Common myeloid progenitor, CD34-positive (primary cell): ENCODE measurements at regions of chr5 and their contacts with region 1.

Region 1: DNA sequence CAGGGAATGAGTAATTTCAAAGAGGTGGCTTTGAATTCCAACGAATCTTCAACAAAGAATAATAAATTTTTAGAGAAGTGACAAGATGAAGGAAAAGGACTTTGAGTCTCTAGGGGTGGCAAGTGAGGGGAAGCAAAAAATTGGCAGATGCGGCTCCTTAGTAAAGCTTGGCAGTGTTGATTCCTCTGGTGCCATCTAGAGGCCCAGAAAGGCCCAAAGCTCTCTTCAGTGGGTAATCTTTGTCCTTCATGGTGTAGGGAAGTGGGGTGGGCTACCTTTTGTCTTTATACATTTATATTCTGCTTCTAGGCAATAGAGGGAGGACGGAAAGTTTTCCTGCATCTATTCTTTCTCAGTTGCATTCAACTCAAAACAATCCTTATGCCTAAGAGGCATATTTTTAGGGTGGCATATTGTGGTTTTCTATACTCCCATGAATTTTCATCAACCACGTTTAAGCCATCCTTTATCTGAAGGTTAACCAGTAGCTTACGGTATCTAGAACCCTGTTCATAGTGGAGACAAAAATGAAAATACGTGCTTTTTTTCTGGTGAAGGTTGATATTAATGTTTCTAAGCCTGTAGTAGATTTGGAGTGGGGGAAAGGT is 17.5 kb upstream of the ROPN1L start:
- DNase-seq: peak; percentile 81 to 92 (median 91)
- H3K4me3 ChIP-seq: no peak overlapping the region
- H3K27ac ChIP-seq: no peak overlapping the region
- H3K4me1 ChIP-seq: peaks cover 29 to 44% (median 39%) of the 10 kb centered on the region in 4 experiments
- H3K27me3 ChIP-seq: no peaks in the 10 kb centered on the region

Region 2: DNA sequence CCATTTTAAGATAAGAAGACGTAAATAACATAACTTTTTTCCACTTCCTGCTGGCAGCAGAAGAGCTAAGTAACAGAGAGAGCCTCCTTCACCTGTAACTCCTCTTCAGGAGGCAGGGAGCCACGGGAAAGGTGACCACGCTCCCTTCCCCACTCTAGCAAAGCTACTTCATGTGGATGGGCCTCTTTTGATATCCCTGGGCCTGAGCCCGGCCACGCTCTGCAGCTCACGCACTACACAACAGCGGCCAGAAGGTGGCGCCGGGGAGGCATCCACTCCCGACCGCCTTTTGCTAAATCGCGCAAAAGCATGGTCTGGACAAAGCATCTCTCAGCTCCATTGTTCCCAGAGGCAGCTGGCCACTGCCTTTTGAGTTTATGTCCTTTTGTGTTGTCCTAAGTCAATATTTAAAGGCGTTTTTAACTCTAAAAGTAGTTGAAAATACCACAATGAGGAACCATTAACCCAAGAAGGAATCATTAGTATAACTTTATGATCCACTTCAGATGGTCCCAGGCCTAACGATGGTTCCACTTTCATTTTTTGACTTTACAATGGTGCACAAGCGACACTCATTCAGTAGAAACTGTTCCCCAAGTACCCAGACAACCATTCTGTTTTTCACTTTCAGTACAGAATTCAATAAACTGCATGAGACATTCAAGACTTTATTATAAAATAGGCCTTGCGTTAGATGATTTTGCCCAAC is 140.1 kb before region 1 on chr5:
- CTCF ChIA-PET with region 1: interaction called, 67 read pairs
- POLR2A ChIA-PET with region 1: no interaction called
- DNase-seq: peak; percentile 66 to 80 (median 73)
- H3K4me3 ChIP-seq: no peak overlapping the region
- H3K27ac ChIP-seq: no peak overlapping the region
- H3K4me1 ChIP-seq: peaks cover 0 to 7% (median 2%) of the 10 kb centered on the region in 4 experiments
- H3K27me3 ChIP-seq: no peaks in the 10 kb centered on the region

Region 3: GRCh38 chr5:10353241-10354047 is 70.8 kb before region 1 on chr5 and contains the start of gene MARCHF6:
- CTCF ChIA-PET with region 1: interaction called, 10 read pairs
- POLR2A ChIA-PET with region 1: no interaction called
- DNase-seq: peak; percentile 93 to 96 (median 95)
- H3K4me3 ChIP-seq: peak within 1 kb of the TSS; percentile 84 to 100 (median 96)
- H3K27ac ChIP-seq: peak within 1 kb of the TSS; percentile 91 to 96
- H3K4me1 ChIP-seq: peaks cover 11 to 51% (median 36%) of the 10 kb centered on the region in 4 experiments
- H3K27me3 ChIP-seq: no peaks in the 10 kb centered on the region

Region 4: DNA sequence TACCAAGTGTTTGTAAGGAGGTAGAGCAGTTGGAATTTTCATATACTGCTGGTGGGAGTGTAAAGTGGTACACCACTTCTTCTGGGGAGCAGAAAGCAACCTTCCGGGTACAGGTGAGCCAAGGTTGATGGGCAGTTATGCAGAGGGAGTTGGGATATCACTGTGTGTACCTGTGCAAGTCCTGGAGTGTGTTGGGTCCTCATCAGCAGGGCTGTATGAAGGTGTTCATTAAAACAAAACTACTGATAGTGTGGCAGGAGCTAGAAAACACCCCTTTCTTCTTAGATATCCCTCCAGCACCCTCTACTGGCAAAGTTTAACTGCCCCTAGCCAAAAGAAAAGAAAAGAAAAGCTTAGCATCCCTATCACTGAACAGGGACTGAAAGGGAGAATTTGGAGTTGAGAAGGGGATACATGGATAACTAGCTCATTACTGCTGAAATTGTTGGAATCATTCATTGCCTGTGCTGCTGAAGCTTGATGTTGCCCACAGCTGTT is 60.0 kb before region 1 on chr5:
- CTCF ChIA-PET with region 1: interaction called, 13 read pairs
- POLR2A ChIA-PET with region 1: interaction called, 4 read pairs
- DNase-seq: peak; percentile 60 to 76 (median 68)
- H3K4me3 ChIP-seq: no peak overlapping the region
- H3K27ac ChIP-seq: no peak overlapping the region
- H3K4me1 ChIP-seq: peaks cover 3 to 25% (median 12%) of the 10 kb centered on the region in 4 experiments
- H3K27me3 ChIP-seq: no peaks in the 10 kb centered on the region

Region 5: DNA sequence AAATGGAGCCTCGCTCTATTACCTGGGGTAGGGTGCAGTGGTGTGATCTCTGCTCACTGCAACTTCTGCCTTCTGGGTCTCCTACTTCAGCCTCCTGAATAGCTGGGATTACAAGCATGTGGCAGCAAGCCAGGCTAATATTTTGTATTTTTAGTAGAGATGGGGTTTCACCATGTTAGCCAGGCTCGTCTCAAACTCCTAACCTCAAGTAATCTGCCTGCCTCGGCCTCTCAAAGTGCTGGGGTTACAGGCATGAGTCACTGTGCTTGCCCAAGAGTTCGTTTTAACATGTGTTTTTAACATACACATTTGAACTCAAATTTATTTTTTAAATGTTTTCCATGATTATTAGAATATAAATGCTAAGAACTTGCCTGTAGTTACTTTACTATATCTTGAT is 36.5 kb before region 1 on chr5:
- CTCF ChIA-PET with region 1: interaction called, 11 read pairs
- POLR2A ChIA-PET with region 1: no interaction called
- DNase-seq: no peak
- H3K4me3 ChIP-seq: no peak overlapping the region
- H3K27ac ChIP-seq: no peak overlapping the region
- H3K4me1 ChIP-seq: no peaks in the 10 kb centered on the region
- H3K27me3 ChIP-seq: no peaks in the 10 kb centered on the region

Region 6: DNA sequence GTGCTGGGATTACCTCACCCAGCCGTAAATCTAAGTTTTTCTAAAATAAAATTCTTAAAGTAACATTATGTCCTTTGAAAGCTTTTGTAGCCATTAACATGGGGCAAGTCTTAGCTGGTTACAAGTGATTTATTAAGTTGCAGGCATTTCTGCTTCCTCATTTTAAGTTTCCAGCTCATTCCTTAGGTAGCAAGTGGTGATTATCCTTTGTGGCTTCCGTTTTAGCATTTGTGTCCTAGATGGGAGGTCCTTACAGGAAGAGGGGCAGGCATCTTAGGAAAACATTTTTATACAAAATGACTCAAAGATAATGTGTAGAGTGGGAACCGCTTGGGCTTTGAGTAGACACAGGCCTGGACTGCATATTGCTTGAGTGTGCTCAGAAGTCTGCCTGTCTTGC is 17.6 kb before region 1 on chr5:
- CTCF ChIA-PET with region 1: interaction called, 23 read pairs
- POLR2A ChIA-PET with region 1: interaction called, 6 read pairs
- DNase-seq: peak; percentile 24 to 69 (median 51)
- H3K4me3 ChIP-seq: peak overlapping the region in 1 of 7 experiments; percentile 44
- H3K27ac ChIP-seq: no peak overlapping the region
- H3K4me1 ChIP-seq: peaks cover 13 to 47% (median 32%) of the 10 kb centered on the region in 4 experiments
- H3K27me3 ChIP-seq: no peaks in the 10 kb centered on the region

Region 7: GRCh38 chr5:10434392-10434791 is 10.2 kb after region 1 on chr5:
- CTCF ChIA-PET with region 1: interaction called, 10 read pairs
- POLR2A ChIA-PET with region 1: no interaction called
- DNase-seq: no peak
- H3K4me3 ChIP-seq: no peak overlapping the region
- H3K27ac ChIP-seq: no peak overlapping the region
- H3K4me1 ChIP-seq: peaks cover 0 to 6% (median 2%) of the 10 kb centered on the region in 4 experiments
- H3K27me3 ChIP-seq: no peaks in the 10 kb centered on the region